ENCODE measurements at regions of chr16 and their contacts with region 1.

Region 1: GRCh38 chr16:68085259-68086071 is at the start of gene NFATC3:
- DNase-seq: peak; percentile 96 to 99 (median 98)
- ATAC-seq: peak; percentile 92
- H3K4me3 ChIP-seq: peak within 1 kb of the TSS; percentile 88
- H3K4me3 Mint-ChIP-seq: peak within 1 kb of the TSS; percentile 82 to 97 (median 92)
- H3K27ac ChIP-seq: peak within 1 kb of the TSS; percentile 85
- H3K27ac Mint-ChIP-seq: peak within 1 kb of the TSS; percentile 71 to 97 (median 92)
- H3K4me1 ChIP-seq: peaks cover 63 to 66% of the 10 kb centered on the region in 2 donors
- H3K4me1 Mint-ChIP-seq: peaks cover 56 to 79% (median 70%) of the 10 kb centered on the region in 7 donors
- H3K27me3 ChIP-seq: no peaks in the 10 kb centered on the region
- H3K27me3 Mint-ChIP-seq: no peaks in the 10 kb centered on the region
- total RNA-seq, gene NFATC3: 120 to 151 (median 147) TPM

Region 2: GRCh38 chr16:67806428-67807147 is 278.9 kb before region 1 on chr16 and contains the starts of genes RANBP10 and TSNAXIP1:
- CTCF ChIA-PET with region 1: no interaction called
- POLR2A ChIA-PET with region 1: no interaction called
- intact Hi-C with region 1: loop called (anchors 1 kb)
- DNase-seq: peak; percentile 91 to 99 (median 97)
- ATAC-seq: peak; percentile 96
- H3K4me3 ChIP-seq: peak within 1 kb of the TSS; percentile 88
- H3K4me3 Mint-ChIP-seq: peak within 1 kb of the TSS; percentile 75 to 97 (median 94)
- H3K27ac ChIP-seq: peak within 1 kb of the TSS; percentile 89
- H3K27ac Mint-ChIP-seq: peak within 1 kb of the TSS; percentile 74 to 97 (median 95)
- H3K4me1 ChIP-seq: peaks cover 29 to 43% of the 10 kb centered on the region in 2 donors
- H3K4me1 Mint-ChIP-seq: peaks cover 13 to 49% (median 42%) of the 10 kb centered on the region in 7 donors
- H3K27me3 ChIP-seq: no peaks in the 10 kb centered on the region
- H3K27me3 Mint-ChIP-seq: peaks cover 0 to under 1% (median 0%) of the 10 kb centered on the region in 5 donors
- total RNA-seq, gene RANBP10: 22.3 to 26.6 (median 24.7) TPM
- total RNA-seq, gene TSNAXIP1: 0.24 to 1.1 (median 0.54) TPM

Region 3: DNA sequence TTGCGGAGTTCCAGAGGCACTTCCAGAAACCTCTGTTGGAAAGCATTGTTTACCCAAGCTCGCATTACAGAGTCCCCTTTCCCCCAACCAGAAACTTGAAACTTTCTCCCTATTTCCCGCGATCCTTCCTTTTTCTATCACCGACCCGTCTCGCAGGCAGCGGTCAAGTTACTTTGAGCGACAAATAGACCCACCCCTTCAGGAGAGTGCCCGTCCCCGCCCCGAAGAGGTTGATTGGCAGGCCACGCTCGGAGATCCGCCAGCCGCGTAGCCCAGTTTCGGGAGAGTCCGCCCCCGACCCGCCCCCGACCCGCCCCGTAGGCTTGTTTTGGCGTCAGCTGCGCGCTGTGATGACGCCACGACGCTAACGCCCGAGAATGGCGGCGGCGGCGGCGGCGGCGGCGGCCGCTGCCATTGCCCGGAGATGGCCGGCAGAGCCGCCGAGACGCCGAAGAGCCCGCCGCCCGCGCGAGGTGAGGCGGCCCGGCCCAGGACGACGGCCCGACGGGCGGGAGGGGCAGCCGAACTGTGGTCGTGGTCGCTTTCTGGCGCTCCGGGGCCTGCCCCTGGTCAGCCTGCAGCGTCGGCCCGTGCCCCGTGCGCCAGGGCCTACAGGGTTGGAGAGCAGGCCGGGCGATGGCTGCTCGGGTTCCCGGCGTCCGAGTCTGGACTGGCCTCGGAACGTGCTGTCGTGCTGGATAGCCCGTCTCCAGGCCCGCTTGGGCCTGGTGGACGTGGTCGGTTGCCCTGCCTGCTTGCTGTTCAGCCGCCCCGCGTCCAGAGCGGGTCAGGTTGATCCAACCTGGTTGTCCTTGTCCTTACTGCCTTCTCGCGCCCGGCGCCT is 192.3 kb before region 1 on chr16 and contains the start of gene PSKH1:
- CTCF ChIA-PET with region 1: no interaction called
- POLR2A ChIA-PET with region 1: no interaction called
- intact Hi-C with region 1: loop called in 1 of 2 experiments (anchors 2 kb)
- DNase-seq: peak; percentile 77 to 92 (median 84)
- ATAC-seq: peak; percentile 99
- H3K4me3 ChIP-seq: peak within 1 kb of the TSS; percentile 89
- H3K4me3 Mint-ChIP-seq: peak within 1 kb of the TSS; percentile 86 to 97 (median 94)
- H3K27ac ChIP-seq: peak within 1 kb of the TSS; percentile 94
- H3K27ac Mint-ChIP-seq: peak within 1 kb of the TSS; percentile 85 to 98 (median 97)
- H3K4me1 ChIP-seq: peaks cover 12 to 15% of the 10 kb centered on the region in 2 donors
- H3K4me1 Mint-ChIP-seq: peaks cover 22 to 48% (median 35%) of the 10 kb centered on the region in 7 donors
- H3K27me3 ChIP-seq: no peaks in the 10 kb centered on the region
- H3K27me3 Mint-ChIP-seq: no peaks in the 10 kb centered on the region
- total RNA-seq, gene PSKH1: 18.0 to 28.5 (median 23.3) TPM

Region 4: DNA sequence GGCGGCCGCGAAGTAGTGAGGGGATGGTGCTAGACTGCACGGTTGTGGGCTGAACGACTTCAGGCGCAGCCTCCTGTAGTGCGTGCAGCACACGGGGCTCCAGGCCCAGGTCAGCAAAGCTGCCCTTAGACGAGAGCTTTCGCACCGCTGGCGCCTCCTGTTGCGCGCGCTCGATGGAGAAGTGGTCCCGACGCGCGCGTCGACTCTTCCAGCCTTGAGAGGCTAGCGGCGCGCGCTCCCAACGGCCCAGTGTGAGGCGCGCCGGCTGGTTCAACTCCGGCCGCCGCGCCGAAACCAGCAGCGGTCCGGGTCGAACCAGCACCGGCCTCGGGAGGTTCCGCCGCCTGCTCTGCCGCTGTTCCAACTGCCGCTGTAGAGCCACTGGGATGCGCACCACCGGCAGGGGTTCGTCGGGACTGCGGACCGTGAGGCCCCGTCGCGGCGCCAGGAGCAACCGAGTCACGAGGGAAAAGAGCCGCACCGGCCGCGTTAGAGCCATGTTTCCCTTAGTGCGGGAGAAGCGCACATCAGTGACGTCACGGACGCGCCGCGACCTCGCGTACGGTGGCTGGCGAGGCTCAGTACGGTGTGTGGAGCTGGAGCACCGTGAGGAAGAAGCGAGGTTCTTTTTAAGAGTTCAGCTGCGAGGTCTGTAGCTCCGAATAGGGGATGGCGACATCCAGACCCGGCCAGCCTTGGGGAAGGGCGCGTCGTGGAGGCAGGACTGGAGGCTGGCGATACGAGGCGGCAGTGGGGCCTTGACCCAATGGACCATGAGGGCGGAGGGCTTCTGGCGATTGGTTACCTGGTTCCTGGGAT is 62.6 kb before region 1 on chr16 and contains the starts of genes DDX28 and DUS2:
- CTCF ChIA-PET with region 1: no interaction called
- POLR2A ChIA-PET with region 1: interaction called, 7 read pairs
- intact Hi-C with region 1: loop called in 1 of 2 experiments (anchors 5 kb)
- DNase-seq: peak; percentile 89 to 98 (median 94)
- ATAC-seq: peak; percentile 98
- H3K4me3 ChIP-seq: peak within 1 kb of the TSS; percentile 67
- H3K4me3 Mint-ChIP-seq: peak within 1 kb of the TSS; percentile 88 to 100 (median 98)
- H3K27ac ChIP-seq: peak within 1 kb of the TSS; percentile 92
- H3K27ac Mint-ChIP-seq: peak within 1 kb of the TSS; percentile 94 to 100 (median 96)
- H3K4me1 ChIP-seq: peaks cover 16 to 22% of the 10 kb centered on the region in 2 donors
- H3K4me1 Mint-ChIP-seq: peaks cover 13 to 42% (median 30%) of the 10 kb centered on the region in 7 donors
- H3K27me3 ChIP-seq: no peaks in the 10 kb centered on the region
- H3K27me3 Mint-ChIP-seq: peaks cover 0 to 2% (median 0%) of the 10 kb centered on the region in 5 donors
- total RNA-seq, gene DDX28: 15.5 to 19.9 (median 19.1) TPM
- total RNA-seq, gene DUS2: 13.6 to 25.9 (median 18.3) TPM

Region 5: DNA sequence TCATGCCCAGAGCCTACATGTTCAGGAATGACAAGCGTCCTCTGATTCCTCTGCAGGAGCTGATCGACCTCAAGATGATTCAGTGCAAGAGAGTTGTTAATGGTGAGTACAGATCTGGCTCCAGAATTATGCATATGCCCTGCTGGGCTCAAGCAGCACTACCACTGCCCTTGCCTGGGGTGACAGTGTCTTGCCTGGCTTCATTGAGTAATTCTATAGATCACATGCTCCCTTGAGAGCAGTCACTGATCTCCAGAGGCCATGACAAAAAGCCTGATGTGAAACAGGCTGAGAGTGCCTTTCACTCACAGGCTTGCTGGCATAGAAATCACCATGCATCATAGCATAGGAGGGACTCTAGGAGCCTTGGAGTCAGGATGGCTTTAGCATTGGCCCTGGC is 36.0 kb before region 1 on chr16:
- CTCF ChIA-PET with region 1: no interaction called
- POLR2A ChIA-PET with region 1: no interaction called
- intact Hi-C with region 1: no loop called
- DNase-seq: no peak
- ATAC-seq: peak; percentile 40
- H3K4me3 ChIP-seq: no peak overlapping the region
- H3K4me3 Mint-ChIP-seq: no peak overlapping the region
- H3K27ac ChIP-seq: no peak overlapping the region
- H3K27ac Mint-ChIP-seq: no peak overlapping the region
- H3K4me1 ChIP-seq: no peaks in the 10 kb centered on the region
- H3K4me1 Mint-ChIP-seq: peaks cover 4 to 9% (median 7%) of the 10 kb centered on the region in 7 donors
- H3K27me3 ChIP-seq: no peaks in the 10 kb centered on the region
- H3K27me3 Mint-ChIP-seq: no peaks in the 10 kb centered on the region

Region 6: DNA sequence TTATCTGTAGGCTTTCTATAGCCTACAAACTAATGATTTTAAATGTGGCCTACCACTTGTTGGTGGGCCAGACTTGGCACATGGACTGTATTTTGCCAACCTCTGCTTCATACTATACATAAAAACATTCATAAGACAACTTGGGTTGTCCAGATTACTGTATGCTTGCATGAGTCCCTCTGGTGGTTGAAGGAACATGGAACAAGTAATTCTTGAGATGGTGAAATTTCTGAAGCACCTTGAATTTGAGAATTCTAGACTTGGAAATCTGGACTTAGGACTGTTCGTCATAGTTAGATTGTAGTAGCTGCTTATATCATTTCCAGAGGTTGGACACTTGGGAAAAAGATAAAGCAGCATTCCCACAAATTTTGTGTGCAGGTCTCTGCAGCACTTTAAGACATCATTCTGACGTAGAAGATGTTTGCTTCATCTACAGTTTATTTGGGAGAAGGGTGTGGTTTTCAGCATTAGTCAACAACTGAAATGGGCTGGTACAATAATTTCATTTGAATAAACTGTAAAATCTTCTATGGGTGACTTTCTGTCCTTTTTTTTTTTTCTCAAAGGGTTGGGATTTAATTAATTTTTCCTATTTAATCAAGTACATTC is 30.9 kb after region 1 on chr16:
- CTCF ChIA-PET with region 1: no interaction called
- POLR2A ChIA-PET with region 1: interaction called, 5 read pairs
- intact Hi-C with region 1: loop called in 1 of 2 experiments (anchors 1 kb)
- DNase-seq: peak in 7 of 9 donors; percentile 11 to 38 (median 19)
- ATAC-seq: peak; percentile 73
- H3K4me3 ChIP-seq: no peak overlapping the region
- H3K4me3 Mint-ChIP-seq: peak overlapping the region in 7 of 10 donors; percentile 3 to 60 (median 52)
- H3K27ac ChIP-seq: peak overlapping the region; percentile 11
- H3K27ac Mint-ChIP-seq: peak overlapping the region in 6 of 9 donors; percentile 28 to 77 (median 57)
- H3K4me1 ChIP-seq: peaks cover 36 to 50% of the 10 kb centered on the region in 2 donors
- H3K4me1 Mint-ChIP-seq: peaks cover 48 to 97% (median 82%) of the 10 kb centered on the region in 7 donors
- H3K27me3 ChIP-seq: no peaks in the 10 kb centered on the region
- H3K27me3 Mint-ChIP-seq: no peaks in the 10 kb centered on the region

Region 7: GRCh38 chr16:68244903-68245853 is 159.7 kb after region 1 on chr16 and contains the start of gene PLA2G15:
- CTCF ChIA-PET with region 1: no interaction called
- POLR2A ChIA-PET with region 1: interaction called, 3 read pairs
- intact Hi-C with region 1: loop called in 1 of 2 experiments (anchors 1 kb)
- DNase-seq: peak; percentile 89 to 96 (median 94)
- ATAC-seq: peak; percentile 99
- H3K4me3 ChIP-seq: peak within 1 kb of the TSS; percentile 99
- H3K4me3 Mint-ChIP-seq: peak within 1 kb of the TSS; percentile 91 to 100 (median 98)
- H3K27ac ChIP-seq: peak within 1 kb of the TSS; percentile 68
- H3K27ac Mint-ChIP-seq: peak within 1 kb of the TSS; percentile 61 to 94 (median 86)
- H3K4me1 ChIP-seq: peaks cover 13 to 14% of the 10 kb centered on the region in 2 donors
- H3K4me1 Mint-ChIP-seq: peaks cover 8 to 33% (median 28%) of the 10 kb centered on the region in 7 donors
- H3K27me3 ChIP-seq: no peaks in the 10 kb centered on the region
- H3K27me3 Mint-ChIP-seq: peaks cover 0 to 2% (median 0%) of the 10 kb centered on the region in 5 donors
- total RNA-seq, gene PLA2G15: 8.5 to 16.8 (median 9.9) TPM

Region 8: GRCh38 chr16:69339289-69340108 is 1254.0 kb after region 1 on chr16 and contains the starts of genes COG8 and NIP7:
- CTCF ChIA-PET with region 1: no interaction called
- POLR2A ChIA-PET with region 1: no interaction called
- intact Hi-C with region 1: loop called in 1 of 2 experiments (anchors 10 kb)
- DNase-seq: peak; percentile 78 to 91 (median 90)
- ATAC-seq: peak; percentile 95
- H3K4me3 ChIP-seq: peak within 1 kb of the TSS; percentile 80
- H3K4me3 Mint-ChIP-seq: peak within 1 kb of the TSS; percentile 97 to 100 (median 99)
- H3K27ac ChIP-seq: peak within 1 kb of the TSS; percentile 86
- H3K27ac Mint-ChIP-seq: peak within 1 kb of the TSS; percentile 95 to 99 (median 98)
- H3K4me1 ChIP-seq: peaks cover 20 to 25% of the 10 kb centered on the region in 2 donors
- H3K4me1 Mint-ChIP-seq: peaks cover 31 to 70% (median 49%) of the 10 kb centered on the region in 7 donors
- H3K27me3 ChIP-seq: no peaks in the 10 kb centered on the region
- H3K27me3 Mint-ChIP-seq: no peaks in the 10 kb centered on the region
- total RNA-seq, gene COG8: 29.5 to 73.7 (median 37.4) TPM
- total RNA-seq, gene NIP7: 22.1 to 40.9 (median 30.3) TPM

Measured in naive thymus-derived CD4-positive, alpha-beta T cell (primary cell).